Sigmoid colon (tissue), 7 donors: ENCODE measurements at regions of chr17 and their contacts with region 1.

Region 1: DNA sequence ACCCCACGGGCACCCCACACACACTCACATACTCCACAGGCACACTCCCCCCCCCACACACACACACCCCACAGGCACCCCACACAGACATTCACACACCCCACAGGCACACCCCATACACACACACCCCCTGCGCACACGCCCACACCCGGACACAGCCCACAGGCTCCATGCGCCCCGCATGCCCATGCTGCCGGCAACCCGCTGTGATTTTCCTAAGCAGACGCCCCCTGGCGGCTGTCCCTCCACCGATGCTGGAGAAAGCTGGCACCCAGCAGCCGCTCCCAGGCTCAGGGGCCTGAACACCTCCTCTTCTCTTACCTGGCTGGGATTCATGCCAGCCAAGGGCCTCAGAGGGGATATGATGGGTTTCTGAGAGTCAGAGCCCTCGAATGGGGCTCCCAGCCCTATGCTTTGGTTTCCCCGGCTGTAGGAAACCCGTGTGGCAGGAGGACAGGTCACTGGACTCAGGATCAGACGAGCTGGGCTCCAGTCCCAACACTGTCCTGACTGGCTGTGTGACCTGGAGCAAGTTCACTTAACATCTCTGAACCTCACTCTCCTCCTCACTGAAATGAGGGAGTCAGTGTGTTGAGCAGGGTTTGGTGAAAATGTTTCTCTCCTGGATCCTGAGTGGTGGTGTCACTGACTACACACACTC is 19.6 kb upstream of the TNFRSF13B start:
- DNase-seq: peak; percentile 85
- H3K4me3 ChIP-seq: no peak overlapping the region
- H3K27ac ChIP-seq: no peak overlapping the region
- H3K4me1 ChIP-seq: peaks cover 0 to 13% (median 9%) of the 10 kb centered on the region in 4 donors
- H3K27me3 ChIP-seq: no peaks in the 10 kb centered on the region
- CTCF ChIP-seq: peak; percentile 23 to 80 (median 68)
- EP300 ChIP-seq: no peak
- POLR2A ChIP-seq: no peak

Region 2: DNA sequence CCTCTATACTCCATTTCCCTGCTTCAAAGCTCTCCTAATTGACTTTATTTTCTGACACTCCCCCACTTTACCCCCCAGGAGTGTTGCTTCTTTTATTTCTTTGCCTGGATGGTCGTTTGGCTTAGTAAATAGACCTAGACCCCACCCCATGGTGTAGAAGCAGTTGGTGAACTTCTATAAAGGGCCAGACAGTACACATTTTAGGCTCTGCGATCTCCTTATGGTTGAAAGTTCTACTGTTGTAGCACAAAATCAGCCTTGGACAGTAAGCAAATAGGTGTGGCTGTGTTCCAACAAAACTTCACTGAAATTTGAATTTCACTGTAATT is 454.4 kb before region 1 on chr17:
- intact Hi-C with region 1: loop called (anchors 5 kb)
- DNase-seq: no peak
- H3K4me3 ChIP-seq: no peak overlapping the region
- H3K27ac ChIP-seq: peak overlapping the region; percentile 88 to 91 (median 90)
- H3K4me1 ChIP-seq: peaks cover 0 to 10% (median 0%) of the 10 kb centered on the region in 4 donors
- H3K27me3 ChIP-seq: peaks cover 0 to 3% (median 0%) of the 10 kb centered on the region in 3 donors
- CTCF ChIP-seq: peak in 2 of 4 experiments; percentile 2 to 7
- EP300 ChIP-seq: no peak
- POLR2A ChIP-seq: no peak

Region 3: DNA sequence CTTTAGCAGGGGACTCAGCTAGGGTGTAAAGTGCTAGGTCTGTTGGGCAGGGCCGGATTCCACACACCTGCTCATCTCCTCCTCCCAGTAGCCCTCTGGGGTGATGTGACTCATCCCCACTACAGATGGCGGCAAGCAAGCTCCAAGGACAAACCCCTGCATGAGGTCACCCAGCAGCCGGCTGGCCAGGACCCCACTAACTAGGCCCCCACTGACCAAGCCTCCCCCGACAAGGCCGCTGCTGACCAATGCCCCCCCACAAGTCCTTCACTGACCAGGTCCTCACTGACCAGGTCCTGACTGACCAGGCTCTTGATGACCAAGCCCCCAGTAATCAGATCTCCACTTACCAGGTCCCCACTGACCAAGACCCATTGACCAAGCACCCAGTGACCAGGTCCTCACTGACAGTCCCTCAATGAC is 56.2 kb before region 1 on chr17:
- intact Hi-C with region 1: no loop called
- DNase-seq: no peak
- H3K4me3 ChIP-seq: no peak overlapping the region
- H3K27ac ChIP-seq: no peak overlapping the region
- H3K4me1 ChIP-seq: no peaks in the 10 kb centered on the region
- H3K27me3 ChIP-seq: no peaks in the 10 kb centered on the region
- CTCF ChIP-seq: no peak
- EP300 ChIP-seq: no peak
- POLR2A ChIP-seq: no peak